CD8-positive, alpha-beta T cell (primary cell): ENCODE measurements at regions of chr14 and their contacts with region 1.

Region 1: DNA sequence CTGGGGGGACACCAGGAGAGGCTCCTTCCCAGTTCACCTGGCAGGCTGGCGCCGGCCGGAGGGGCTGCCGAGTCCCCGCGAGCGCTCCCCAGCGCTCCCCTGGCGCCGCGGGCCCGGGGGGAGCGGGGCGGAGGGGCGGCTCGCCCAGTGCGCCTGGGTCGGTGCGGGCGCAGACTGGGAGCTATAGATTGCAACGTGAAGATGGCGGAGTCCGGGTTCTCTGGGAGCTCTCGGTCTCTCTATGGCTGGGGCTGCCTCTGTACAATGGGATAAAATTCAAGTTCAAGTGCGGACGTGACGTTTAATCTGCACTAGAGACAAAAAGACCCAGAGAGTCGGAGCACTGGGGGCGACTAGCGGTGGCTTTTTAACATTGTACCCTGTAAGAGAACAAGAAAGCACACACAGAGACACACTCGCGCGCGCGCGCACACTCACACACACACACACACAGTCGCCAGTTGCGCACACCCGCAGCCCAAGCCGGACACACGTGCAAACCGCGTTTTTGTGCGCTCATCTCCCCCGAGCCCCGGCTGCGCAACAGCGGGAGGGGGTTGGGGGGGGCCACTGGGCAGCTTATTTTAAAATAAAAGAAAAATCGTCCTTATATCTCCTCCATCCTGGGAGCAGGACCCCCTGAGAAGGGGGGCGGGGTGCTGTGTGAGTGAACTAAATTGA is at the start of gene BCL11B:
- DNase-seq: peak in 8 of 9 experiments; percentile 74 to 93 (median 89)
- ATAC-seq: peak; percentile 73
- H3K4me3 ChIP-seq: peak within 1 kb of the TSS; percentile 81 to 88
- H3K4me3 Mint-ChIP-seq: peak within 1 kb of the TSS; percentile 99
- H3K27ac ChIP-seq: peak within 1 kb of the TSS; percentile 68 to 97
- H3K27ac Mint-ChIP-seq: peak within 1 kb of the TSS; percentile 98
- H3K4me1 ChIP-seq: peaks cover 17% of the 10 kb centered on the region
- H3K4me1 Mint-ChIP-seq: peaks cover 34% of the 10 kb centered on the region
- H3K27me3 ChIP-seq: no peaks in the 10 kb centered on the region
- H3K27me3 Mint-ChIP-seq: no peaks in the 10 kb centered on the region
- CTCF ChIP-seq: peak; percentile 61
- total RNA-seq, gene BCL11B: 273 to 284 TPM

Region 2: GRCh38 chr14:97458661-97459579 is 1813.2 kb before region 1 on chr14:
- CTCF ChIA-PET with region 1: no interaction called
- POLR2A ChIA-PET with region 1: no interaction called
- intact Hi-C with region 1: loop called (anchors 5 to 10 kb)
- DNase-seq: peak; percentile 60 to 92 (median 84)
- ATAC-seq: peak; percentile 81
- H3K4me3 ChIP-seq: peak overlapping the region; percentile 53 to 62
- H3K4me3 Mint-ChIP-seq: peak overlapping the region; percentile 88
- H3K27ac ChIP-seq: peak overlapping the region; percentile 82 to 88
- H3K27ac Mint-ChIP-seq: peak overlapping the region; percentile 97
- H3K4me1 ChIP-seq: peaks cover 34% of the 10 kb centered on the region
- H3K4me1 Mint-ChIP-seq: peaks cover 75% of the 10 kb centered on the region
- H3K27me3 ChIP-seq: no peaks in the 10 kb centered on the region
- H3K27me3 Mint-ChIP-seq: no peaks in the 10 kb centered on the region
- CTCF ChIP-seq: no peak

Region 3: GRCh38 chr14:97707603-97708002 is 1564.5 kb before region 1 on chr14:
- CTCF ChIA-PET with region 1: no interaction called
- POLR2A ChIA-PET with region 1: no interaction called
- intact Hi-C with region 1: loop called in 1 of 2 experiments (anchors 5 kb)
- DNase-seq: peak in 6 of 9 experiments; percentile 26 to 68 (median 50)
- ATAC-seq: peak; percentile 13
- H3K4me3 ChIP-seq: peak overlapping the region; percentile 6 to 16
- H3K4me3 Mint-ChIP-seq: peak overlapping the region; percentile 63
- H3K27ac ChIP-seq: peak overlapping the region in 1 of 2 experiments; percentile 63
- H3K27ac Mint-ChIP-seq: peak overlapping the region; percentile 78
- H3K4me1 ChIP-seq: peaks cover 84% of the 10 kb centered on the region
- H3K4me1 Mint-ChIP-seq: peaks cover 97% of the 10 kb centered on the region
- H3K27me3 ChIP-seq: no peaks in the 10 kb centered on the region
- H3K27me3 Mint-ChIP-seq: no peaks in the 10 kb centered on the region
- CTCF ChIP-seq: no peak

Region 4: GRCh38 chr14:97994020-97994531 is 1278.0 kb before region 1 on chr14:
- CTCF ChIA-PET with region 1: interaction called, 3 read pairs
- POLR2A ChIA-PET with region 1: interaction called, 3 read pairs
- intact Hi-C with region 1: loop called (anchors 5 kb)
- DNase-seq: peak in 7 of 9 experiments; percentile 7 to 79 (median 58)
- ATAC-seq: peak; percentile 81
- H3K4me3 ChIP-seq: no peak overlapping the region
- H3K4me3 Mint-ChIP-seq: peak overlapping the region; percentile 9
- H3K27ac ChIP-seq: peak overlapping the region; percentile 62 to 83
- H3K27ac Mint-ChIP-seq: peak overlapping the region; percentile 98
- H3K4me1 ChIP-seq: peaks cover 66% of the 10 kb centered on the region
- H3K4me1 Mint-ChIP-seq: peaks cover 84% of the 10 kb centered on the region
- H3K27me3 ChIP-seq: no peaks in the 10 kb centered on the region
- H3K27me3 Mint-ChIP-seq: no peaks in the 10 kb centered on the region
- CTCF ChIP-seq: no peak

Region 5: GRCh38 chr14:98227000-98227726 is 1044.9 kb before region 1 on chr14:
- CTCF ChIA-PET with region 1: interaction called, 3 read pairs
- POLR2A ChIA-PET with region 1: interaction called, 7 read pairs
- intact Hi-C with region 1: loop called in 1 of 2 experiments (anchors 5 kb)
- DNase-seq: peak in 2 of 9 experiments; percentile 32 to 57
- ATAC-seq: no peak
- H3K4me3 ChIP-seq: peak overlapping the region in 1 of 2 experiments; percentile 25
- H3K4me3 Mint-ChIP-seq: peak overlapping the region; percentile 67
- H3K27ac ChIP-seq: peak overlapping the region; percentile 41 to 63
- H3K27ac Mint-ChIP-seq: peak overlapping the region; percentile 92
- H3K4me1 ChIP-seq: peaks cover 92% of the 10 kb centered on the region
- H3K4me1 Mint-ChIP-seq: peaks cover 89% of the 10 kb centered on the region
- H3K27me3 ChIP-seq: no peaks in the 10 kb centered on the region
- H3K27me3 Mint-ChIP-seq: no peaks in the 10 kb centered on the region
- CTCF ChIP-seq: no peak

Region 6: DNA sequence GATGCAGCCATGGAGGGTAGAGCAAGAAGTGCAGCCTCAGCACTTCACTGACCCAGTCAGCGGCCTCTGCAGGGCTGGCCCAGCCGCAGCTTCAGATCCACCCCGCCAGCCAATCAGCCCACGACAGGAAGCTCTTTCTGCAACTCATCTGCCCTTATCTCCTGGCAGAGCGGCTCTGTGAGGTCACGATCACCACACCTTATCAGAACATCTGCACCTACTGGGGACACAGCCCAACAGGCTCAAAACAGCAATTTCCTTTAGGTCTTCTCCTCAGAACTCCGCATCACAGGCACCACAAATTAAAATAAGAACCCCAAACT is 287.4 kb before region 1 on chr14:
- CTCF ChIA-PET with region 1: no interaction called
- POLR2A ChIA-PET with region 1: interaction called, 3 read pairs
- intact Hi-C with region 1: loop called (anchors 5 kb)
- DNase-seq: peak; percentile 45 to 84 (median 72)
- ATAC-seq: peak; percentile 93
- H3K4me3 ChIP-seq: no peak overlapping the region
- H3K4me3 Mint-ChIP-seq: peak overlapping the region; percentile 80
- H3K27ac ChIP-seq: peak overlapping the region; percentile 25 to 65
- H3K27ac Mint-ChIP-seq: peak overlapping the region; percentile 94
- H3K4me1 ChIP-seq: peaks cover 31% of the 10 kb centered on the region
- H3K4me1 Mint-ChIP-seq: peaks cover 40% of the 10 kb centered on the region
- H3K27me3 ChIP-seq: no peaks in the 10 kb centered on the region
- H3K27me3 Mint-ChIP-seq: no peaks in the 10 kb centered on the region
- CTCF ChIP-seq: no peak

Region 7: GRCh38 chr14:99260587-99261551 is 11.2 kb before region 1 on chr14:
- CTCF ChIA-PET with region 1: interaction called, 36 read pairs
- POLR2A ChIA-PET with region 1: interaction called, 61 read pairs
- intact Hi-C with region 1: loop called in 1 of 2 experiments (anchors 1 kb)
- DNase-seq: peak in 7 of 9 experiments; percentile 57 to 90 (median 79)
- ATAC-seq: peak; percentile 21
- H3K4me3 ChIP-seq: peak overlapping the region; percentile 45 to 46
- H3K4me3 Mint-ChIP-seq: peak overlapping the region; percentile 100
- H3K27ac ChIP-seq: peak overlapping the region; percentile 96 to 97
- H3K27ac Mint-ChIP-seq: peak overlapping the region; percentile 100
- H3K4me1 ChIP-seq: peaks cover 90% of the 10 kb centered on the region
- H3K4me1 Mint-ChIP-seq: peaks cover 97% of the 10 kb centered on the region
- H3K27me3 ChIP-seq: no peaks in the 10 kb centered on the region
- H3K27me3 Mint-ChIP-seq: no peaks in the 10 kb centered on the region
- CTCF ChIP-seq: no peak